Transverse colon (tissue), 4 donors: ENCODE measurements at regions of chr2 and their contacts with region 1.

Region 1: DNA sequence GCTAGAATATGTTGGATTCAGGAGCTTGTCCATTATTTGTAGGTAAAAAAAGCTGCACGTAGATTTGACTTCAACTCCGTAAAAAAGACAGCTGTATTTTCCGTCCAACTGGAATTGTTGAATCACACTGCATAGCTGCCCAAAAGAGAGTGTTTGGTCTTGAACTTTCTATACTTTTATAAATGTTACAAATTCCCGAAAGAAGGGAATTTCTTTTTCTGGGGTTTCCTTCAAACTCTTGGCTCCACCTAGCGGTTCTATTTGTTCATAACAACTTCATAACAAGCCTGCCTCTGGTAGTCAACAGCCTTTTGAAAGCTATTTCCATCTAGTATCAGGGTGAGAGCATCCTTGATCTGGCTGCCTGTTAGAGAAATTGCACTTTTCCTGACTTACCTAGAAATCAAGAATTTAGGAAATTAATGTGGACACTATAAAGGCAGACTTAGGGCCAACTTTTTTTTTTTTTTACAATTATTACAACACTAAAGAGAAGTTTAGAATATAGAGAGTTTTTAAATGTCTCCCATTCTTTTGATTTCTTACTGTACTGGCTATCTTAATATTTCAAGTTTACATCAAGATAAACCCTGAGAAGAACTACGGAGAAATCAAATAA is 48.1 kb downstream of the TMEM185B start:
- DNase-seq: no peak
- H3K4me3 ChIP-seq: no peak overlapping the region
- H3K27ac ChIP-seq: no peak overlapping the region
- H3K4me1 ChIP-seq: peaks cover 0 to 3% (median 0%) of the 10 kb centered on the region in 4 donors
- H3K27me3 ChIP-seq: no peaks in the 10 kb centered on the region
- CTCF ChIP-seq: peak; percentile 73 to 79 (median 74)
- EP300 ChIP-seq: no peak
- POLR2A ChIP-seq: no peak

Region 2: DNA sequence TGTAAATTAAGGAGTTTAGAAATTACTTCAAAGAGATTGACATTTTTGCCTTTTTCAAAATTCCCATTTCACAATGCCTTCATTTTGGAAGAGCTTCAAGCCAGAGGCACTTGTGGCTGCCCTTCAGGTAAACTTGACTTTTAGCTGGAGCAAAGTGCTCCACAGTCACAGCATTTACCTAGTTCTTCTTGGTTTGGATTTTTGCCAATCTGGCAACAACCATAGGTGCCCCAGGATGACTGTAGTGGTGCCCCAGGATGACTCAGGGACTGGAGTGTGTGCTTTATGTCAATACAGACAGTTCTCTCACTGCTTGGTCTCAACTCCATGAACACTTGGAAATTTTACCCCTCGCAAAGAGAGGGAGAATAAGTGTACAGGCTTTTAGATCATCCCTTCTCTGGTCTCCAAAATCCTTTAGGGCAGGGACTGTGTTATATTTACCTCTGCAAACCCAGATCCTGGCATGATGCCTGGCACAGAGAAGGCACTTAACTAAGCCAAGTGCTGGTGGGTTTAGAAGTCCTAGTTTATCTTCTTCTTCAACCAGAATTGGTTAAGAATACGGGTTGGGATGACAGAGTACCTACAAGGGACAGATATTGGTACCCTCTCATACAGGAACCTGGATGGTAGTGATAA is 430.7 kb before region 1 on chr2:
- in situ Hi-C with region 1: loop called in 3 of 4 experiments (anchors 10 to 25 kb)
- intact Hi-C with region 1: no loop called
- DNase-seq: no peak
- H3K4me3 ChIP-seq: no peak overlapping the region
- H3K27ac ChIP-seq: no peak overlapping the region
- H3K4me1 ChIP-seq: no peaks in the 10 kb centered on the region
- H3K27me3 ChIP-seq: no peaks in the 10 kb centered on the region
- CTCF ChIP-seq: no peak
- EP300 ChIP-seq: no peak
- POLR2A ChIP-seq: no peak

Region 3: DNA sequence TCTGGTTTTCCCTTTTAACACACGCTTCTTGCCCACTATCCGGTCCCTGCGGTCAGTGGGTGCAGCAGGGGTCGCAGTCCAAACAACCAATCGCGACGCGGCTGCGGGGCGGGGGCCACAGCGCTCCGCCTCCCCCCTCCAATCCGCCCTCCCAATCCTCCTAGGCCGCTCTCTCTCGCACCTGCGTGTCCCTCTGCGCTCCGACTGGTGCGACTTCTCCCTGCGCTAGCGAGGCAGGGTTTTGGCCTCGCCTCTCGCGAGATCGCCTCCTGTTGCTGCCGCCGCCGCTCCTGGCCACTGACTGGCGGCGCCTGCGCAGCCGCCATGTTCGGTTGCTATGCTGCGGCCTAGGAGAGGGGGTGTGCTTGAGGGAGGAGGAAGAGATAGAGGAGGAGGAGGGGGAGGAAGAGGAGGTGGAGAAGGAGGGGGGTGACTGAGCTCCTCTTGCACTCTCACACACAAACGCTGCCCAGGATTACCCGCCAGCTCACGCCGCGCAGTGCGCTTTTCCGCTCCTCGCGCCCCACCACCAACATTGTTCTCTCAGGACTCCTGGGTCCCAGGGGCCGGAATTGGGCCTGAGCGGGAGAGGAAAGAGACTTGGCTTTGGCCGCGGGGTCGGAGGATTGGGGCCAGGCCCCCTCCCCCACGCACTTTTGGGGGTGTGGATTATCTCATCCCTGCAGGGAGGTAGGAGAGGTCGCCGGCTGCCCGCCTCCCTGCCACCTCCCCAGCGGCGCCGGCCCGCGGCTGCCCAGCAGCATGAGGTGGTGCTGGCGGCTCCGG is 415.4 kb before region 1 on chr2 and contains the start of gene PTPN4:
- in situ Hi-C with region 1: loop called in 1 of 4 experiments (anchors 10 kb)
- intact Hi-C with region 1: no loop called
- DNase-seq: peak; percentile 98
- H3K4me3 ChIP-seq: peak within 1 kb of the TSS; percentile 79 to 94 (median 89)
- H3K27ac ChIP-seq: peak within 1 kb of the TSS; percentile 91 to 98 (median 97)
- H3K4me1 ChIP-seq: peaks cover 12 to 40% (median 26%) of the 10 kb centered on the region in 4 donors
- H3K27me3 ChIP-seq: no peaks in the 10 kb centered on the region
- CTCF ChIP-seq: no peak
- EP300 ChIP-seq: no peak
- POLR2A ChIP-seq: peak; percentile 95
- total RNA-seq, gene PTPN4: 18.7 to 46.6 (median 25.8) TPM

Region 4: GRCh38 chr2:120109186-120110061 is 65.6 kb before region 1 on chr2:
- in situ Hi-C with region 1: loop called in 1 of 4 experiments (anchors 10 kb)
- intact Hi-C with region 1: no loop called
- DNase-seq: no peak
- H3K4me3 ChIP-seq: no peak overlapping the region
- H3K27ac ChIP-seq: no peak overlapping the region
- H3K4me1 ChIP-seq: peaks cover 11 to 29% (median 18%) of the 10 kb centered on the region in 4 donors
- H3K27me3 ChIP-seq: no peaks in the 10 kb centered on the region
- CTCF ChIP-seq: no peak
- EP300 ChIP-seq: no peak
- POLR2A ChIP-seq: no peak

Region 5: DNA sequence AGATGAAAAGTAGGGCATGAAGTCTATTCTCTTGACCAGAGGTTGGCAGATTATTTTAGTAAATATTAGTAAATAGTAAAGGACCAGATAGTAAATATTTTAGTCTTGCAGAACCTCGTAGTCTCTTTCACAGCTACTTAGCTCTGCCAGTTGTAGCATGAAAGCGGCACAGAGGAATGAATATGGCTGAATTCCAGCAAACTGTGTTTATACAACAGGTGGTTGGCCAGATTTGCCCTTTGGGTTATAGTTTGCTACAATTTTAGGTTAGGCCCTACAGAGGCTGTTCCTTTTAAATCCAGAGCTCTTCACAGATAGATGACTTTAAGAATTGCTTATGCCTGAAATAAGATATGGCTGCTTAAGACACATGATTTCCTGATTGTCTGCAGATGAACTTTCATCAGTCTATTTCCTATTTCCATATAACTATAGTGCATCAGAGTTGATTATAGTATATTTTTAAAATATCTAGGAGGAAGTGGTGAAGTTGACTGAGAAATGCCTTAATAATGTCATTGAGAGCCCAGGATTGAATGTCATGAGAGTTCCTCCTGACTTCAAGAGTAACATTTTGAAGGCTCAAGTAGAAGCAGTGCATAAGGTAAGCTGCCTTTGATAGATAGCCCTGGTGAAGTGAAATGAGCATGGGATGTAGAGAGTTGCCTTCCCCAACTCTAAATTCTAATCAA is 32.4 kb before region 1 on chr2:
- in situ Hi-C with region 1: no loop called
- intact Hi-C with region 1: no loop called
- DNase-seq: no peak
- H3K4me3 ChIP-seq: no peak overlapping the region
- H3K27ac ChIP-seq: no peak overlapping the region
- H3K4me1 ChIP-seq: no peaks in the 10 kb centered on the region
- H3K27me3 ChIP-seq: no peaks in the 10 kb centered on the region
- CTCF ChIP-seq: no peak
- EP300 ChIP-seq: no peak
- POLR2A ChIP-seq: no peak